Activated CD4-positive, alpha-beta T cell treated with anti-CD3 and anti-CD28 coated beads, Interleukin-2, amount 10 ng/mL, durations not matched to agents 24 days and 14 days (primary cell): ENCODE measurements at regions of chr17 and their contacts with region 1.

Region 1: GRCh38 chr17:58692239-58693055 is at the start of gene RAD51C:
- DNase-seq: peak; percentile 97
- H3K4me3 Mint-ChIP-seq: peak within 1 kb of the TSS; percentile 95
- H3K27ac Mint-ChIP-seq: peak within 1 kb of the TSS; percentile 96
- H3K4me1 Mint-ChIP-seq: peaks cover 21% of the 10 kb centered on the region
- H3K27me3 Mint-ChIP-seq: no peaks in the 10 kb centered on the region
- total RNA-seq, gene RAD51C: 73.7 and 78.8 TPM in 2 replicates

Region 2: DNA sequence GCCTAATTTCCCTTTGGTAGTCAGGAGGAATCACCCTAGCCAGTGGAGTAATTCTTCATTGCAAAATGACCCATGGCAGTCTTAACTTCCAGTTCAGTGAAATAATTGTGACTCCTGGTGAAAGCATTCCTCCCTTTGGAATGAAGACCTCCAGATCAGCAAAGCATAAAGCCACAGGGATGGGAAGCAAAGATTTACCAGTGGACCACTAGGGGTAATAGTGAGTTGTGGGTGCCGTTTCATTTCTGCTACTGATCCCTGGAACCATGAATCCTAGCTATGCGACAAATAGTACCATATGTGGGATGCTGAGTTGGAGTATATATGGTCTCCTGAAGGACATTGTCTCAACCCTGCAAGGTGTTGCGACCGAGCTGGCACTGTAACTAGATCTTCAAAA is 595.6 kb before region 1 on chr17:
- intact Hi-C with region 1: no loop called
- DNase-seq: no peak
- H3K4me3 Mint-ChIP-seq: no peak overlapping the region
- H3K27ac Mint-ChIP-seq: no peak overlapping the region
- H3K4me1 Mint-ChIP-seq: peaks cover 10% of the 10 kb centered on the region
- H3K27me3 Mint-ChIP-seq: peaks cover 7% of the 10 kb centered on the region

Region 3: DNA sequence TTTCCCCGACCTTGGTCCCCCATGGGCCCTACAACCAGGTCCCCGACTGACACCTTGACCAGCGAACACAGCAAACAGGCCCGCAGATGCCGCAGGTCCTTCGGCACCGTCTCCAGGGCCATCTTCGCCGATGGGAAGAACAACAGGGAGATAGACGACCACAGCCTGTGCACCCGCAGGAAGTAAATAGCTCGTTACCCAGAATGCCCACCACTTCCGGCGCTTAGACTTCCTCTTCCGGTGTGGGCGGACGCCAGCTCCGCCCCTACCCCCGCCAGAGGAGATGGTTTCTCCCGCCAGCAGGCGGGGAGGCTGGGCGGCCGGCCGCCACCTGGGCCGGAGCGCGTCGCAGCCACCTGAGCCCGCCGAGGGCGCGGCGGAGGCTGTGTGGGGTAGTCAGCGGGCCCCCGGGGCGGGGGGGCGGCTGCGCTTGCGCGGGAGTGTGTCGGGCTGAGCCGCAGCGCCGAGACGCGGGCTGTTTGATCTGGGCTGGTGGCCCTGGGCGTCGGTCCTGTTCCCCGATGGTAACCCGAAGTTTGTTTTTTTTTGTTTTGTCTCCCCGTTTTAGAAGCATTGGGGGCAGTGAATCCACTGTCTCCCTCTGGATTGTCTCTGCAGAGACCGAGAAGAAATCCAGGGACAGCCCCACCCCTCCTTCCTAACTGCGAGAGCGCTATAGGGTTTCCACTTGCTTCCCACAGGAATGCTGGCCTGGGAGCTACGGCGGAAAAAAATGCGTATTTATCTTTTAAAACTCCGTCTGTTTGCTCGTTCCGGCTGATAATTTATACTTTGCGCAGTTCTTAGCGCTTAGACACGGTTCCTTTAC is 340.2 kb before region 1 on chr17 and contains the start of gene SUPT4H1:
- intact Hi-C with region 1: no loop called
- DNase-seq: peak; percentile 97
- H3K4me3 Mint-ChIP-seq: peak within 1 kb of the TSS; percentile 100
- H3K27ac Mint-ChIP-seq: peak within 1 kb of the TSS; percentile 99
- H3K4me1 Mint-ChIP-seq: peaks cover 45% of the 10 kb centered on the region
- H3K27me3 Mint-ChIP-seq: no peaks in the 10 kb centered on the region
- total RNA-seq, gene SUPT4H1: 139 and 143 TPM in 2 replicates

Region 4: DNA sequence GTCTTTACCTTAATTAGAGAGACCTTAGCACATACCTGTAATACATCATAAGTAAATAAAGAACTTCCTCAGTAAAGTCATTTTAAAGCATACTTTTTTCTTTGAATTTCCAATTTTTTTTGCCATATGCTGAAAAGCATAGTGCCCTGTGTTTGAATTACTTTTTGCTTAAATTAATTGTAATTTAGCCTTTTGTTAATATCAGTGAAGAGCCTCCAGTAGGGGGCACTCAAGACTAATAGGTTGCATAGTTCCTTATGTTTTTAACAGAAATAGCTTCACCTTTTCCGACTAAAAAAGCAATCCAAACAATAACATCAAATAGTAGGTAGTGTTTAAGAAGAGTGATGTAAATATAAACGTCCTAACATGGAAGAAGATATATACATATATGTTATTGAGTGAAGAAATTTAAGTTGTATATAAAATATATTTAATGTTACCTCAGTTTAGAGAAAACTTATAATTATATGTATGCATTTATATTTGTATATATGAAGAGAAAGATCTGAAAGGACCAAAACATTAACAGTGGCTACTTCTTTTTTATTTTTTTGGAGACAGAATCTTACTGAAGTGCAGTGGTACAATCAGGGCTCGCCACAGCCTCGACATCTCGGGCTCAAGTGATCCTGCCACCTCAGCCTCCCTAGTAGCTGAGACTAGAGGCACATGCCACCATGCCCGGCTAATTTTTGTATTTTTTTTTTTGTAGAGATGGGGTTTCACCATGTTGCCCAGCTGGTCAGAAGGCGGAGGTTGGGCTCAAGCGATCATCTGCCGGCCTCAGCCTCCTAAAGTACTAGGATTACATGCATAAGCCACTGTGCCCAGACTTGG is 18.7 kb after region 1 on chr17:
- intact Hi-C with region 1: loop called (anchors 2 kb)
- DNase-seq: peak; percentile 80
- H3K4me3 Mint-ChIP-seq: no peak overlapping the region
- H3K27ac Mint-ChIP-seq: no peak overlapping the region
- H3K4me1 Mint-ChIP-seq: peaks cover 11% of the 10 kb centered on the region
- H3K27me3 Mint-ChIP-seq: no peaks in the 10 kb centered on the region

Region 5: GRCh38 chr17:58722696-58723095 is 30.2 kb after region 1 on chr17:
- intact Hi-C with region 1: no loop called
- DNase-seq: no peak
- H3K4me3 Mint-ChIP-seq: no peak overlapping the region
- H3K27ac Mint-ChIP-seq: no peak overlapping the region
- H3K4me1 Mint-ChIP-seq: no peaks in the 10 kb centered on the region
- H3K27me3 Mint-ChIP-seq: no peaks in the 10 kb centered on the region